Posterior cingulate gyrus (tissue), 11 donors: ENCODE measurements at regions of chr17 and their contacts with region 1.

Region 1: GRCh38 chr17:77054936-77055335 is 85.8 kb upstream of the SEC14L1 start:
- DNase-seq: no peak

Region 2: GRCh38 chr17:76868176-76868668 is 186.7 kb before region 1 on chr17 and contains the start of gene MGAT5B:
- intact Hi-C with region 1: loop called (anchors 1 kb)
- DNase-seq: peak; percentile 51 to 96 (median 76)

Region 3: DNA sequence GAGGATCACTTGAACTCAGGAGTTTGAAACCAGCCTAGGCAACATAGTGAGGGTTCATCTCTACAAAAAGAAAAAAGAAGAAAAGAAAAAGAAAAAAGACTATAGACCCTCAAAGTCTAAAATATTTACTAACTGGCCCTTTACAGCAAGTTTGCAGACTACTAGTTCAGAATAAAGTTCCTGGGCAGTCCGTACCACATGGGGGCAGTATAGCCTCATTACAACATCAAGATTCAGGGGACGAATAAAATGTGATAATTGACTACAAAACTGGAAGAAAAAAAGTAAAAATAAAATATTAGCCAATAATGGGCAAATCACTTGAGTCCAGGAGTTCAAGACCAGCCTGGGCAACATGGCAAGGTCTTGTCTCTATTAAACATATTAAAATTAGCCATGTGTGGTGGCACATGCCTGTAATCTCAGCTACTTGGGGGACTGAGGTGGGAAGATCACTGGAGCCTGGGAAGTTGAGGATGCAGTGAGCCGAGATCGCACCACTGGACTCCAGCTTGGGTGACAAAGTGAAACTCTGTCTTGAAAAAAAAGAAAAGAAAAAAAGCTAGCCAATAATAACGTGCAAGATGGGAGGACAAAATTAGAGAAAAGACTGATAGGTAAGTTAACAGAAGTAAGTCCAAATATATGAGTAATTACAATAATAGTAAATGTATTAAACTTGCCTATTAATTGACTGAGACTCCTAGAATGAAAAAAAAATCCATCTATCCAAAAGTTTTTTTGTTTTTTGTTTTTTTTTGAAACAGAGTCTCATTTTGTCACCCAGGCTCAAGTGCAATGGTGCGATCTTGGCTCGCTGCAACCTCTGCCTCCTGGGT is 43.5 kb before region 1 on chr17:
- intact Hi-C with region 1: loop called (anchors 2 kb)
- DNase-seq: peak in 4 of 10 donors; percentile 27 to 58 (median 52)